Left cardiac atrium (tissue), 4 donors: ENCODE measurements at regions of chr11 and their contacts with region 1.

Region 1: DNA sequence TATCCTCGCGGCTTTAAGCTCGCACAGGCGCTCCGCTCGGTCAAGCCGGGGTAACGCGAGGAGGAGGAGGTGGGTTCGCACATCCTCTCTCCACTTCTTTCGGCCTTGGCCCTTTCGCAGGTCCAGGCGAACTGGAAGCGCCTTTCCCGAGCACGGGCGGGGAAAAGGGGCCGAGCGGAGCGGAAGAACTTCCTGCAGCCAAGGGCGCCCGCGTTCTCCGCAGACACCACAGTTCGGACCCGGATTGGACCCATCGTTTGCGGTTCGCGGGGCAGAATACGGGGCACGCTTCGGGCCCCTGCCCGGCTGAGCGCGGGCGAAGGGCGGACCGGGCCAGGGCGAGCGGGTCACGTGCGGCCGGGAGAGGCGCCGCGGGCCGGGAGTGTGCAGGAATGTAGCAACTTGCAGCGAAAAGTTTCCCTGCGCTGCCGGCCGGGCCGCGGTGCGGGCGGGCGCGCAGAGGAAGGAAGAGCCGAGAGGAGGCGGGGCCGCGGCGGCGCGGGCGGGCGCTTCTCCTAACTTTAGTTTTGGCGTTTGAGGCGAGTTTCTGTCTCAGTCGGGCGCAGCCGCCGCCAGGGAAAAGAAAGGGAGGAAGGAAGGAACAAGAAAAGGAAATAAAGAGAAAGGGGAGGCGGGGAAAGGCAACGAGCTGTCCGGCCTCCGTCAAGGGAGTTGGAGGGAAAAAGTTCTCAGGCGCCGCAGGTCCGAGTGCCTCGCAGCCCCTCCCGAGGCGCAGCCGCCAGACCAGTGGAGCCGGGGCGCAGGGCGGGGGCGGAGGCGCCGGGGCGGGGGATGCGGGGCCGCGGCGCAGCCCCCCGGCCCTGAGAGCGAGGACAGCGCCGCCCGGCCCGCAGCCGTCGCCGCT is at the start of gene YAP1:
- DNase-seq: peak; percentile 91
- ATAC-seq: peak; percentile 90
- total RNA-seq, gene YAP1: 59.1 to 67.5 TPM

Region 2: DNA sequence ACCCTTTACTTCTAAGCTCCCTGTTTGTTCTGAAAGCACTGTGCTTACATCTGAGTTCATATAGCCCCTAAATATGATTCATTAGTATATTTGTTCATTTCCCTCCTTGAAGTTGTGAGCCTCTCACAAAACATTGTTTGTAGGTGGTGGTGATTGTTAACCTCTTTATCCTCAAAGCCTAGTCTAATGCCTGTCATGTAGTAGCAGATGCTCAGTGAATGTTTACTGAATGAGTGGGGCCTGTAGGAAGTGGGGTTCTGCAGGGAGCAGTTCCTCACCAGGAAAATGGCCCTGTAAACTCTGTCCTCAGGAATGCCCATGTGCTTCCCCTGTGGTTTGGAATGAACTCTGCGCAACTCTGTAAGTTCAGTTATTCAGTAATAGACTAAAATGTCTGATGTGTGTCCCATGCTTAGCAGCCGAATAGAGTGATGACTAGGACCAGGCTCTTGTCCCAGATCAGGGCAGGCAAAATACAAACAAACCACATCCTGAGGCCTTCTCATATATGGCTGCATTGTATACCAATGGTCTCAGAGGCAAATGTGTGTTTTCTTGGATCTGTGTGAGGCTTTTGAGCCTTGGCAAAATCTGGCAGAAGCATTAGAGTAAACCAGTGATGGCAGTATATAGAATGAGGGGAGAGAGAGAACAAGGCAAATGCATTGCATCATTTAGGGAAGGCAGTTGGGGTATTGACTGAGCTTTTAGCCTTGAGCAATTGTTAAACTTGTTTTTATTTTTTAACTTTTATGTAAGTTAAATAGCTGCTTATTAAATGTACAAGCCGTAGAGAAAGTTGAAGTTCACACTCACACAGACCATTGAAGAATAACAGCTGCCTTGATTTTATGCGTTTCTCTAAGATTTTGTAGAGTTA is 115.8 kb after region 1 on chr11:
- intact Hi-C with region 1: loop called in 1 of 2 experiments (anchors 5 kb)
- DNase-seq: no peak
- ATAC-seq: peak; percentile 34 to 37